Posterior vena cava (tissue), 2 donors: ENCODE measurements at regions of chr3 and their contacts with region 1.

Region 1: GRCh38 chr3:99875929-99876841 is 58.5 kb downstream of the CMSS1 start:
- DNase-seq: peak; percentile 96

Region 2: DNA sequence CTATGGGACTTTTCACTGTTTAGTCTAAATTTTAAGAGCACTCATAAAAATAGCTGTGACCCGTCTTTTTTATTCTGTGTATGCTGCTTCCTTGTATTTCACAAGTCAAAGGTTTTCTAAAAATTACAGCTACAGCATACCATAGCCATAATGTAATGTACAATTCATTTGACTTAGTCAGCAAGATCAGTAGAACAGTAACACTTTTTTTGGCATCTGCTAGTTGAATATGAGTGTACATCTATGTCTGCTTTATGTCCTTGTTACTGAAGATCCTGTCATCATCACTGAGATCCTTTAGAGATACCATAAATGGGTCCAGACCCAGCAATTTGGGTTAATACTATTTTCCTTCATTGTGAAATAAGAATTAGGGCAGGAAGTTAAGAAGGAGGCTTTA is 16.4 kb before region 1 on chr3:
- intact Hi-C with region 1: no loop called
- DNase-seq: no peak

Region 3: GRCh38 chr3:99909714-99910494 is 33.7 kb after region 1 on chr3:
- intact Hi-C with region 1: no loop called
- DNase-seq: no peak

Region 4: DNA sequence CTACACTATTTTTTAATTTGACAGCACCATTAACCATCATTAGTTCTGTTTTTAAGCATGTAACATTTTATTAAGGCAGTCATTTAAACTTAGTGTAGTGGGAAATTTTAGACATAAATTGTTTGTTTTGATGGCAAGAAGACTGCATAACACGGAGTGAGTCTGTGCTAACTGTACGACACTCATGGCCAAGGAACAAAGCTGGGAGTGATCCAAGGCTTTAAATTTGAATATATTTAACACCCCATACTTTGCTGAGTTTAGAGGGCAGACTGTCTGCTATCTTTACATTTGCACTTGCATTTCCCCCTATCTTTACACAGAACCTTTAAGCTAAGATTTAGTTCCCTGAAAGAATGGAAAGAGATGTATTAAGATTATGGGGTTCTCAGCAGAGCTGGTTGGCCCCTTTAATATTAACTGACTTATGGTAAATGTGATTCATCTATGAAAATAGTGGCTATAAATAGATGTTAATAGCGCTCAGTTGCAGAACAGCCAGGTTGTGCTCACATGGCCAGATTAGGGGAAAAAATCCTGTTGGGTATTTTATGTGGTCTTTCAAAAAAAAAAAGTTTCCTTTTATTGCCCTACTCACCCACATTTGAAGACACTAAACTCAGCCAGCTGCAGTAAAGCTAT is 62.2 kb after region 1 on chr3:
- intact Hi-C with region 1: loop called (anchors 5 to 10 kb)
- DNase-seq: no peak

Region 5: GRCh38 chr3:100045696-100046095 is 169.5 kb after region 1 on chr3:
- intact Hi-C with region 1: loop called in 1 of 2 experiments (anchors 5 kb)
- DNase-seq: peak; percentile 85